ENCODE measurements at regions of chr19 and their contacts with region 1.

Region 1: DNA sequence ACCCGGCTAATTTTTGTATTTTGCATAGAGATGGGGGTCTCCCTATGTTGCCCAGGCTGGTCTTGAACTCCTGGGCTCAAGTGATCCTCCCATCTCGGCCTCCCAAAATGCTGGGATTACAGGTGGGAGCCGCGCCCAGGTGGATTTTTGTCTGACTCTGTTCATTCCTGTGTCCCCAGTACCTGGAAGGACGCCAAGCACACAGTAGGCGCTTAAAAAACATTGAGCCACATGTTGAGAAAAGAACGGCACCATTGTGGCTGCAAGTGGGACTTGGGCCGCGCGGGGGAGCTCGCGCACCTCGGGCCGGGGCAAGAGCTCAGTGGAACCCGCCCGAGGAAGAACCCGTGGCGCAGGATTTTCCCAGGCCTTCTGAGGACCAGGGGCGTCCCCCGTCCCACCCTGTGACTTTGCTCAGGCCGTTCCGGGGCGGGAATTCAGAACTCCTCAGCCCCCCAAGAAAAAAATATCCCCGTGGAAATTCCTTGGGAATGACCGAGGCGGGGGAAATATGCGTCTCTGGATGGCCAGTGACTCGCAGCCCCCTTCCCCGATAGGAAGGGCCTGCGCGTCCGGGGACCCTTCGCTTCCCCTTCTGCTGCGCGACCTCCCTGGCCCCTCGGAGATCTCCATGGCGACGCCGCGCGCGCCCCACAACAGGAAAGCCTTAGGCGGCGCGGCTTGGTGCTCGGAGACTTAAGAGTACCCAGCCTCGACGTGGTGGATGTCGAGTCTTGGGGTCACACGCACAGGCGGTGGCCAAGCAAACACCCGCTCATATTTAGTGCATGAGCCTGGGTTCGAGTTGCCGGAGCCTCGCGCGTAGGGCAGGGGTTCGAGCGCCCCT is 1.4 kb upstream of the ICAM1 start:
- DNase-seq: peak; percentile 69 to 92 (median 85)
- ATAC-seq: peak; percentile 68
- H3K4me3 ChIP-seq: peak overlapping the region; percentile 78
- H3K4me3 Mint-ChIP-seq: peak overlapping the region; percentile 80 to 88 (median 86)
- H3K27ac ChIP-seq: peak overlapping the region; percentile 75
- H3K27ac Mint-ChIP-seq: peak overlapping the region; percentile 79 to 96 (median 88)
- H3K4me1 ChIP-seq: peaks cover 7 to 13% of the 10 kb centered on the region in 2 donors
- H3K4me1 Mint-ChIP-seq: peaks cover 8 to 39% (median 23%) of the 10 kb centered on the region in 7 donors
- H3K27me3 ChIP-seq: no peaks in the 10 kb centered on the region
- H3K27me3 Mint-ChIP-seq: no peaks in the 10 kb centered on the region

Region 2: DNA sequence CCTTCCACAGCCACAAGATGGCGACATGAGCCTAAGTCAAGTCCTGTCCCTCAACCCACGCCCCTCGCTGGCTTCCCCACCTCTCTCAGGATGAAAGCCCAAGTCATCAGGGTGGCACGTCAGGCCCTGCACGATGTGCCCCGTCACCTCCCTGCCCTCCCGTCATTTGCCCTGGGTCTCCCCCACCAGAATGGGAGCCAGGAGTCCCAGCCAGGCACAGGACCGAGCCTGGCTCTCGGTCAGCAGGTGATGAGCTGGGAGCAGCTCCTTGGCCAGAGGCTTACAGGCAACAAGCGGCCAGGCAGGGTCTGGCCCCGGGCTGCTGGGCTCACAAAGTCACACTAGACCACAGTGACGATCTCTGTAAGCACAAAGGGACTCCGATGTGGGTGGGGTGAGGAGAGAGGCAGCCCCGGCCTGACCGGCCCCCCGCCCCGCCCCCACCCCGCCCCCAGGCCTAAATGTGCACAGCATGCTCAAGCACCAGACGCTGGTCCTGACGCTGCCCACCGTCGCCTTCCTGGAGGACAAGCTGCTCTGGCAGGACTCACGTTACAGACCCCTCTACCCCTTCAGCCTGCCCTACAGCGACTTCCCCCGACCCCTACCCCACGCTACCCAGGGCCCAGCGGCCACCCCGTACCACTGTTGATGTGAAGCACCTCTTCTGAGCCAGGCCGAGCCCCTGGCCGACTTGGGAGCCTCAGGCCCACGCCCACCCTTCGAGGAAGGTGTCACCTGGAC is 10.2 kb before region 1 on chr19:
- CTCF ChIA-PET with region 1: interaction called, 26 read pairs
- POLR2A ChIA-PET with region 1: interaction called, 3 read pairs
- intact Hi-C with region 1: loop called in 1 of 2 experiments (anchors 1 kb)
- DNase-seq: peak; percentile 61 to 88 (median 82)
- ATAC-seq: peak; percentile 95
- H3K4me3 ChIP-seq: no peak overlapping the region
- H3K4me3 Mint-ChIP-seq: peak overlapping the region in 1 of 10 donors; percentile 49
- H3K27ac ChIP-seq: no peak overlapping the region
- H3K27ac Mint-ChIP-seq: peak overlapping the region in 1 of 9 donors; percentile 87
- H3K4me1 ChIP-seq: no peaks in the 10 kb centered on the region
- H3K4me1 Mint-ChIP-seq: peaks cover 0 to 29% (median 4%) of the 10 kb centered on the region in 7 donors
- H3K27me3 ChIP-seq: no peaks in the 10 kb centered on the region
- H3K27me3 Mint-ChIP-seq: no peaks in the 10 kb centered on the region

Region 3: DNA sequence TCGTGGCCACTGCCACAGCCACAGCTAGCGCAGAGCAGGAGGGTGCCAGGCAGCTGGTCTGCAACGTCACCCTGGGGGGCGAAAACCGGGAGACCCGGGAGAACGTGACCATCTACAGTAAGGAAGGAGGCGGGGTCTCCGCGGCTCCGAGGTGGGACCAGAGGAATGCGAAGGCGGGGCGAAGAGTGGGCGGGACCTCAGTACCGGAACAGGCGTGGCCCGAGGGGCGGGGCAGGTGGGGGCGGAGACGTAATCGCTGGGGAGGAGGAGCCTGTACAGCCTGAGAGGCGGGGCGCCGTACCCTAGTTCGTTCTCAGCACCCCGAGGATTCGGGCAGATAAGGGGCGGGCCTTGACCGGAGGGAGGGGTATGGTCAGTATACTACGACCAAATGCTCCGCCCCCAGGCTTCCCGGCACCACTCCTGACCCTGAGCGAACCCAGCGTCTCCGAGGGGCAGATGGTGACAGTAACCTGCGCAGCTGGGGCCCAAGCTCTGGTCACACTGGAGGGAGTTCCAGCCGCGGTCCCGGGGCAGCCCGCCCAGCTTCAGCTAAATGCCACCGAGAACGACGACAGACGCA is 22.7 kb after region 1 on chr19:
- CTCF ChIA-PET with region 1: interaction called, 7 read pairs
- POLR2A ChIA-PET with region 1: interaction called, 28 read pairs
- intact Hi-C with region 1: loop called (anchors 1 kb)
- DNase-seq: peak in 8 of 9 donors; percentile 49 to 85 (median 54)
- ATAC-seq: peak; percentile 74
- H3K4me3 ChIP-seq: peak overlapping the region; percentile 54
- H3K4me3 Mint-ChIP-seq: peak overlapping the region; percentile 70 to 87 (median 80)
- H3K27ac ChIP-seq: no peak overlapping the region
- H3K27ac Mint-ChIP-seq: peak overlapping the region in 4 of 9 donors; percentile 34 to 88 (median 68)
- H3K4me1 ChIP-seq: peaks cover 62 to 66% of the 10 kb centered on the region in 2 donors
- H3K4me1 Mint-ChIP-seq: peaks cover 44 to 71% (median 60%) of the 10 kb centered on the region in 7 donors
- H3K27me3 ChIP-seq: peaks cover 8 to 55% of the 10 kb centered on the region in 2 donors
- H3K27me3 Mint-ChIP-seq: peaks cover 43 to 81% (median 52%) of the 10 kb centered on the region in 5 donors

Region 4: DNA sequence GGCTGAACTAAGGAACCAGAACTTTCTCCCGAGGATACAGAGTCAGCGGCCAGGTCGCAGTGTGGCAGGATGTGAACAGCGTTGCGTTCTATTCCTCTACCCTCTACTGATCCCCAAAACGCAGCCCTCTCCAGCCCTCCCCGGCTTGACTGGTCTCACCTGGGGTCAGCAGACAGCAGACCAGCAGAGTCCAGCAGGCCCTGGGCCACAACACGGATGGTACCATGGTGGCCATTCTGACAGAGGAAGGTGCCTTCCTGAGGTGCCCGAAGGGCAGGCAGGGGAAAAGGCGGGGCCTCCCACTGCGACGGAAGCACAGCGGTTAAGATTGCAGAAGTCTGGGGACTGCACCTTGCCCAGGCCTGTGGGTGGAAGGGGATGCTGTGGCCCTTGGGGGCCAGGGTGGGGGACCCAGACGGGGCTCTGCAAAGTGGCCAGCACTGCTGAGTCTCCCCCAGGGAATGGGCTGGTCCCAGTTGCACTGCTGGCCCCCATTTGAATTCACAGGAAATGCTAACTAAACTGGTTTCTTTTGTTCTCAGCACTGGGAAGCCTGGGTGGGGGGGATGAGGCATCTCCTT is 69.9 kb after region 1 on chr19 and contains the start of gene ICAM3:
- CTCF ChIA-PET with region 1: interaction called, 4 read pairs
- POLR2A ChIA-PET with region 1: interaction called, 6 read pairs
- intact Hi-C with region 1: loop called (anchors 1 to 5 kb)
- DNase-seq: peak; percentile 47 to 73 (median 56)
- ATAC-seq: peak; percentile 96
- H3K4me3 ChIP-seq: peak within 1 kb of the TSS; percentile 57
- H3K4me3 Mint-ChIP-seq: peak within 1 kb of the TSS; percentile 93 to 100 (median 98)
- H3K27ac ChIP-seq: peak within 1 kb of the TSS; percentile 80
- H3K27ac Mint-ChIP-seq: peak within 1 kb of the TSS; percentile 89 to 98 (median 96)
- H3K4me1 ChIP-seq: peaks cover 17 to 25% of the 10 kb centered on the region in 2 donors
- H3K4me1 Mint-ChIP-seq: peaks cover 11 to 46% (median 30%) of the 10 kb centered on the region in 7 donors
- H3K27me3 ChIP-seq: no peaks in the 10 kb centered on the region
- H3K27me3 Mint-ChIP-seq: no peaks in the 10 kb centered on the region
- total RNA-seq, gene ICAM3: 165 to 202 (median 189) TPM

Region 5: DNA sequence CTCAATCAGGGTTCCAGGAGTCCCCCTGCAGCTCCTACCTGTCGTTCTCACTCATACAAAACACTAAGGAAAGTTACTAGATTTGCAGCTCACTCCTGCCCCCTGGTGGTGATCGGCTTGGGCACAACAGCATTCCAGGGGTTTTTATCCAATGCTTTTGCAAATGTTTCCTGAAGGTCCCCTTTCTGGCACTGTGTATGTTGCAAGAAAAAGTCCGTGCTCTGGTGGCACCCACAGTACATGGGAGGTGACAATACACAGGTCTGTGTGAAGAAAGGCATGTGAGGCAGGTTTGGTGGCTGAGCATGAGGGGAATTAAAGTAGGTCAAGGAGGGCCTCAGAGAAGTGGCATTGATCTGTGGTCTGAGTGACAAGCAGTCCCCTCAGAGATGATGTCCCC is 119.4 kb after region 1 on chr19:
- CTCF ChIA-PET with region 1: interaction called, 146 read pairs
- POLR2A ChIA-PET with region 1: interaction called, 31 read pairs
- intact Hi-C with region 1: loop called (anchors 1 kb)
- DNase-seq: peak; percentile 62 to 82 (median 74)
- ATAC-seq: peak; percentile 77
- H3K4me3 ChIP-seq: no peak overlapping the region
- H3K4me3 Mint-ChIP-seq: no peak overlapping the region
- H3K27ac ChIP-seq: no peak overlapping the region
- H3K27ac Mint-ChIP-seq: peak overlapping the region in 7 of 9 donors; percentile 7 to 56 (median 24)
- H3K4me1 ChIP-seq: no peaks in the 10 kb centered on the region
- H3K4me1 Mint-ChIP-seq: peaks cover 0 to 8% (median 4%) of the 10 kb centered on the region in 7 donors
- H3K27me3 ChIP-seq: no peaks in the 10 kb centered on the region
- H3K27me3 Mint-ChIP-seq: no peaks in the 10 kb centered on the region